ENCODE measurements at regions of chr12 and their contacts with region 1.

Region 1: GRCh38 chr12:2194060-2194459 is 141.3 kb downstream of the CACNA1C start:
- DNase-seq: no peak
- H3K4me3 Mint-ChIP-seq: no peak overlapping the region
- H3K27ac Mint-ChIP-seq: no peak overlapping the region
- H3K4me1 Mint-ChIP-seq: peaks cover 5% of the 10 kb centered on the region
- H3K27me3 Mint-ChIP-seq: peaks cover 80% of the 10 kb centered on the region
- CTCF ChIP-seq: no peak

Region 2: GRCh38 chr12:1920436-1920835 is 273.6 kb before region 1 on chr12:
- CTCF ChIA-PET with region 1: interaction called, 11 read pairs
- intact Hi-C with region 1: no loop called
- DNase-seq: no peak
- H3K4me3 Mint-ChIP-seq: no peak overlapping the region
- H3K27ac Mint-ChIP-seq: no peak overlapping the region
- H3K4me1 Mint-ChIP-seq: no peaks in the 10 kb centered on the region
- H3K27me3 Mint-ChIP-seq: peaks cover 82% of the 10 kb centered on the region
- CTCF ChIP-seq: no peak

Region 3: GRCh38 chr12:2049604-2050540 is 144.2 kb before region 1 on chr12:
- CTCF ChIA-PET with region 1: no interaction called
- intact Hi-C with region 1: no loop called
- DNase-seq: no peak
- H3K4me3 Mint-ChIP-seq: no peak overlapping the region
- H3K27ac Mint-ChIP-seq: no peak overlapping the region
- H3K4me1 Mint-ChIP-seq: no peaks in the 10 kb centered on the region
- H3K27me3 Mint-ChIP-seq: peaks cover 98% of the 10 kb centered on the region
- CTCF ChIP-seq: no peak